HEK293T (cell line): ENCODE measurements at regions of chr1 and their contacts with region 1.

Region 1: DNA sequence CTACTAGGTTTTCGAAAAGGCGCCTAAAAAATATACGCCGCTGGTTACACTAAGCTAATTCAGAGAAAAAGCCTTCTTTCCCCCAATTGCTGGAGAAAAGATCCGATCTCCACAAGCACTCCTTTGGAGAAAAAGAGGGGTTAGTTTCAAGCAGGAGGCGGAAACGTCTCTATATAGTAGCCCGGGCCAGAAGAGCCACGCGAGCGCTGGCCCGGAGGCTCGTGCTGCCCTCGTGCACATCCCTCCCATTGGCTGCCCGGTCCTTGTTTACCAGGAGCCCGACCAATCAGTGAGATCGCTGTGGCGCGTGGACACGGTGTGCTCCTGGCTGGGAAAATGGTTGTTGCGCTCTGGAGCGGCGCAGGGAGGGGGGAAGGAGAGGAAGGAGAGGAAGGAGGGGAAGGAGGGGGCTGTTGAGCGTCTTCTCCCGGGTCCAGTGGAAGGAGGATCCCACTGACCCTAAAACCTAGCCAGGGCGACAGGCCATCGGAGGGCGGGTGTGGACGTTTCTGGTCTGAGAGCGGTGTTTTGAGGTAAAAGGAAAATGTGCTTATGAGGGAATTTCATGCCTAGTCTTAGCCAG is at the start of gene TXNIP:
- DNase-seq: peak; percentile 99

Region 2: DNA sequence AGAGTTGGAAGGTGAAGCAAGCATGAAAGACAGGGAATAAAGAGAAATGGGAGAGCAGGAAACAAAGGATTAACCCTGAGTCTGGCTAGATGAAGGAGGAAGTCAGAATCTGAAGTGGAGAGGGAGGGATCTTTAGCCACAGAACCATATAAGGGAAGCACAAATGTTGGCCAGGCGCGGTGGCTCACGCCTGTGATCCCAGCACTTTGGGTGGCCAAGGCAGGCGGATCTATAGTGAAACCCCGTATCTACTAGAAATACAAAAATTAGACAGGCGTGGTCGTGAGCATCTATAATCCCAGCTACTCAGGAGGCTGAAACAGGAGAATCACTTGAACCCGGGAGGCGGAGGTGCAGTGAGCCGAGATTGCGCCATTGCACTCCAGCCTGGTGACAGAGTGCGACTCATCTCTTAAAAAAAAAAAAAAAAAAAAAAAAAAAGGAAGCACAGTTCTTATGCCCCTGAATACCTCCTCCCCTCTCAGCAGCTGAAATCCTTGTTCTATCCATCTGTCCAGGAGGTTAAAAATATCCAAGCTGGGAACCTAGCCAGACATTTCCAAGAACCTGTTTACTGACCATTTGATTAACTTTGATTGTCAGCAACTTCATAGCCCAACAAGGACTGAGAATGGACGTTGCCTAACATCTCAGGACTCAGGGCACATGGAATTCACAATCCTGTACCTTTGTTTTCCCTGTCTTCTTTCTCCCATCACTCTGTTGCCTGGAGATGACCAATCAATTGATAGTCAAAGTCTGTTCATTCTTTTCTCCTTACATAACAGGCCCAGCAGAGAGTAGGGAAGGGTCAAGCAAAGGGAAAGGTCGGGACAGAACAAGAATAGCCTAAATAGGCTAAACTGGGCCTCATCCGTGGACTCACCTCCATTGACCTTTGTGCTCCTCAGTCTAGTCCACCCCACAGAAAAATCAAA is 10.8 kb before region 1 on chr1:
- CTCF ChIA-PET with region 1: no interaction called
- POLR2A ChIA-PET with region 1: interaction called, 115 read pairs
- DNase-seq: no peak

Region 3: DNA sequence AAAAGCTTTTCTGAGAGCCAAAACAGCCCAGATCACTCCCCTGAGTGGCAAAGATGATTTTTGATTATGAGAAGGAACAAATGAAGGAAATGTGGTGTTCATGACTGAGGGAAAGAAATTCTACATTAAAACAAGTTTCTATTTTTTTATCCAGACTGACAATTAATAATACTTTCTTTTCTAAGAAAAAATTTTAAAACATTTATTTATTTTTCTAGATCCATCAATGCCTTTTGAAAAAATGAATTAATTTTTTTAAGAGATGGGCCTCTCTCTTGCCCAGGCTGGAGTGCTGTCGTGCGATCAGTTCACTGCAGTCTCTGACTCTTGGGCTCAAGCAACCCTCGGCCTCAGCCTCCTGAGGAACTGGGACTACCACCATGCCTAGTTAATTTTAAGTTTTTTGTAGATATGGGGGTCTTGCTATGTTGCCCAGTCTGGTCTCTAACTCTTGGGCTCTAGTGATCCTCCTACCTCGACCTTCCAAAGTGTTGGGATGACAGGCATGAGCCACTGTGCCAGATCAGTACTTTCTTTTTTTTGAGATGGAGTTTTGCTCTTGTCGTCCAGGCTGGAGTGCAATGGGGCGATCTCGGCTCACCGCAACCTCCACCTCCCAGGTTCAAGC is 11.1 kb after region 1 on chr1:
- CTCF ChIA-PET with region 1: interaction called, 10 read pairs
- POLR2A ChIA-PET with region 1: interaction called, 18 read pairs
- DNase-seq: no peak